H1 (cell line): ENCODE measurements at regions of chr11 and their contacts with region 1.

Region 1: GRCh38 chr11:17878743-17879142 is 134.1 kb downstream of the SERGEF start:
- DNase-seq: no peak
- H3K4me3 ChIP-seq: no peak overlapping the region
- H3K27ac ChIP-seq: no peak overlapping the region
- H3K4me1 ChIP-seq: peaks cover 0 to 3% (median 3%) of the 10 kb centered on the region in 4 experiments; a peak in 1 of 7 replicates
- H3K27me3 ChIP-seq: no peaks in the 10 kb centered on the region
- CTCF ChIP-seq: no peak
- EP300 ChIP-seq: no peak
- POLR2A ChIP-seq: no peak
- RAD21 ChIP-seq: no peak

Region 2: GRCh38 chr11:17890325-17890724 is 11.6 kb after region 1 on chr11:
- CTCF ChIA-PET with region 1: interaction called, 21 read pairs
- POLR2A ChIA-PET with region 1: no interaction called
- DNase-seq: no peak
- H3K4me3 ChIP-seq: no peak overlapping the region
- H3K27ac ChIP-seq: no peak overlapping the region
- H3K4me1 ChIP-seq: peaks cover 2 to 12% (median 3%) of the 10 kb centered on the region in 4 experiments; a peak in 3 of 7 replicates
- H3K27me3 ChIP-seq: no peaks in the 10 kb centered on the region
- CTCF ChIP-seq: peak in 1 of 3 experiments; percentile 31; a peak in 1 of 4 replicates
- EP300 ChIP-seq: no peak
- POLR2A ChIP-seq: no peak
- RAD21 ChIP-seq: peak; percentile 12 to 26; a peak in 2 of 4 replicates